Activated CD4-positive, alpha-beta memory T cell treated with anti-CD3 and anti-CD28 coated beads for 36 hours (primary cell): ENCODE measurements at regions of chr12 and their contacts with region 1.

Region 1: DNA sequence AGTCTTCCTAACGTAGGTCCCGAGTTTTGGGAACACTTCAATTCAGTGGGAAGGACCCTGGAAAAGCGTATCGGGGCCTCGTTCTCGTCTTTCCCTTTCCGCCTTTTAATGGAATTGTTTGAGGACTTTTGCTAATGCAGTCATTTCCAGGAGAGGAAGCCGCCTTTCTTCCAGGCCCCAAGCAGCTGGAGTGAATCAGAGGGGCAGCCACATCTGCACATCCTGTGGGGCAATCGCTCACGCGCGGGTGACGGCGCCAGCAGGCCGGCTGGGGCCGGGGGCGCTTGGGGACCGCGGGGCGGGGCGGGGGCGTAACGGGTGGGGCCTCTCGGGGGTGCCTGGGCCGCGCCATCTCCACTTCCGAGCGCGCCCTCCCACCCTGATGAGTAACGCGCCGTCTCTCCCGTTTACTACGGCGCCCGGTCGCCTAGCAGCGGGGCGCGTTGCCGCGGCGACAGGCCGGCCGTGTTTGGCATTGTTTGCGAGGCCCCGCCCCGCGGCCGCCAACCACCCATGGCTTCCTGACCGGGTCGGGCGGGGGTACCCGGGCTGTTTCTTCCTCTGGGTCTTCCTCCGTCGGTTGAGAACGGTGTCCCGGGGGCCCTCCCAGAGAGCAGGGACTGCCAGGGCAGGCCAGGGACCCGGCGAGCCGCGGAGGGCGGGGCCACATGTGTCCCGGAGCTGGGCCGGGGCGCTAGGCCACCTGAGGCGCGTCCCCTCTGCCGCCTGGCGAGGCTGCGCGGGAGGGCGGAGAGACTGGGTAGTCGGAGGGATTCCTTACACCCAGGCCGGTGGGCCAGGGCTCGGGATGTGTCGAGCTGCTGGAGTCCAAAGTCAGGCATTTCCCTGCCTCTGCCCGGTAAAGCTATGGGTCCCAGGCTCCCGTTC is 2.3 kb downstream of the GSG1 start:
- DNase-seq: peak; percentile 93
- H3K4me3 Mint-ChIP-seq: peak overlapping the region; percentile 61
- H3K27ac Mint-ChIP-seq: peak overlapping the region; percentile 83
- H3K4me1 Mint-ChIP-seq: peaks cover 57% of the 10 kb centered on the region
- H3K27me3 Mint-ChIP-seq: no peaks in the 10 kb centered on the region

Region 2: DNA sequence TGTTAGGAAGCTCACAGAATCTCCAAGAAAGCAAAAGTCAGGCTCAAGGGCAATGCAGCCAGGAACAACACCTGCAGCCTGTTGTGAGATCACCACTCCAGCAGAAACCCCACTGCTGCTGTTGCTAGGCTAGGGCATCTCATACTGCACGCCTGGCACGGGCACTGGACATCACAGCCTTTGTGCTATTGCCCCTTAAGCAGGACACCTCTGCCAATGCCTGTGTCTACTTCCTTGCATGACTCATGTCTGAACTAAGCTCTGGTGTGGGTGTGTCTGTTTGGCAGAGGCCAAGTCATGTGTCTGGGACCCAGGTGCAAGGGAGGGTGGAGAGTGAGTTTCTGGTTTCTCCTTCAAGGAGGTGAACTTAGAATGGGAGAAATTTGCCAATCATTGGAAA is 297.9 kb before region 1 on chr12:
- CTCF ChIA-PET with region 1: no interaction called
- POLR2A ChIA-PET with region 1: no interaction called
- intact Hi-C with region 1: loop called (anchors 2 kb)
- DNase-seq: peak; percentile 61
- H3K4me3 Mint-ChIP-seq: no peak overlapping the region
- H3K27ac Mint-ChIP-seq: peak overlapping the region; percentile 50
- H3K4me1 Mint-ChIP-seq: peaks cover 46% of the 10 kb centered on the region
- H3K27me3 Mint-ChIP-seq: no peaks in the 10 kb centered on the region

Region 3: GRCh38 chr12:12954356-12954755 is 146.8 kb before region 1 on chr12:
- CTCF ChIA-PET with region 1: no interaction called
- POLR2A ChIA-PET with region 1: no interaction called
- intact Hi-C with region 1: no loop called
- DNase-seq: no peak
- H3K4me3 Mint-ChIP-seq: no peak overlapping the region
- H3K27ac Mint-ChIP-seq: no peak overlapping the region
- H3K4me1 Mint-ChIP-seq: no peaks in the 10 kb centered on the region
- H3K27me3 Mint-ChIP-seq: peaks cover 3% of the 10 kb centered on the region

Region 4: DNA sequence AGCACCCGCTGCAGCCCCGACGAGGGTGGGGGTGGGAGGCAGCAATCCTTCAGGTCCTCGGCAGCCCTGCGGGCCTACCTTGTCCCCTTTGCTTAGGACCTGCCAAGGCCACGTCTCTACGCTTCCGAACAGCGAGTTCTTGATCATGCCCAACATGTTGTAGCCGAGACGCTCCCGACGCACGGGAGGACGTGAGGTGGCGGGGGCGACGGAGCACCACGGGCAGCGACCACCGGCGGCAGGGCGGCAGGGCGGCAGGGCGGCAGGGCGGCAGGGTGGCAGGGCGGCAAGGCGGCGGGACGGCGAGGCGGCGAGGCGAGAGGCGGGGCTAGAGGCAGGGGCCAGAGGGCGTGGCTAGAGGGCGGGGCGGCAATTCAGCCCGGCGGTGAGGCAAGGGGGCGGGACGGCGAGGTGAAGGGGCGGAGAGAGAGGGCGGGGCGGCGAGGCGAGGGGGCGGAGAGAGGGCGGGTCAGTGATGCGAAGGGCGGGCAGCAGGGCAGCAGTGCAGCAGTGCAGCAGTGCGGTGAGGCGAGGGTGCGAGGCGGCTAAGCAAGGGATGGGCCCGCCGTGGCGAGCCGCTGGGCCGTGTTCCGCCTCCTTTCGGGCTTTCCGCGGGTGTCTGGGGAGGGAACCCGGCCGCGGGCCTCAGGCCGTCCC is 101.0 kb before region 1 on chr12 and contains the start of gene HEBP1:
- CTCF ChIA-PET with region 1: no interaction called
- POLR2A ChIA-PET with region 1: no interaction called
- intact Hi-C with region 1: loop called (anchors 2 kb)
- DNase-seq: peak; percentile 97
- H3K4me3 Mint-ChIP-seq: peak within 1 kb of the TSS; percentile 82
- H3K27ac Mint-ChIP-seq: peak within 1 kb of the TSS; percentile 53
- H3K4me1 Mint-ChIP-seq: peaks cover 25% of the 10 kb centered on the region
- H3K27me3 Mint-ChIP-seq: peaks cover 6% of the 10 kb centered on the region
- total RNA-seq, gene HEBP1: 20.5 to 22.4 TPM

Region 5: DNA sequence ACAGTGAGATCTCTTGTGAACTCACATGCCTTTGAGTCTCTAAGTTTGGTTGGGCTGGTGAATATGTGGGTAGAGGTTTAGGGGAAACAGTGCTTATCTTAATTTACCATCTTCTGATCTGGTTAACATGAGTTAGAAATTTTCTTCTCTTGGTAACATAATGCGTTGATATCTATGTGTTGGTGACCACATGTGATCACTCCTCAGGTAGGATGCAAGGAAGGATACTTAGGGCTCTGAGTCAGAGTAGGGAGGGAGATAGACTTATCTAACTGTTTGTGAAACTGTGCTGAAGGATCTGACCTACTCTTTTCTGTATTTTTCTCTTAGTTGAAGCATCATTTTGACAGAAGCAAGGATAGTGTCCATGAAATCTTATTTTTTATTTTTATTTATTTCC is 33.8 kb before region 1 on chr12:
- CTCF ChIA-PET with region 1: no interaction called
- POLR2A ChIA-PET with region 1: no interaction called
- intact Hi-C with region 1: no loop called
- DNase-seq: no peak
- H3K4me3 Mint-ChIP-seq: no peak overlapping the region
- H3K27ac Mint-ChIP-seq: no peak overlapping the region
- H3K4me1 Mint-ChIP-seq: no peaks in the 10 kb centered on the region
- H3K27me3 Mint-ChIP-seq: no peaks in the 10 kb centered on the region

Region 6: DNA sequence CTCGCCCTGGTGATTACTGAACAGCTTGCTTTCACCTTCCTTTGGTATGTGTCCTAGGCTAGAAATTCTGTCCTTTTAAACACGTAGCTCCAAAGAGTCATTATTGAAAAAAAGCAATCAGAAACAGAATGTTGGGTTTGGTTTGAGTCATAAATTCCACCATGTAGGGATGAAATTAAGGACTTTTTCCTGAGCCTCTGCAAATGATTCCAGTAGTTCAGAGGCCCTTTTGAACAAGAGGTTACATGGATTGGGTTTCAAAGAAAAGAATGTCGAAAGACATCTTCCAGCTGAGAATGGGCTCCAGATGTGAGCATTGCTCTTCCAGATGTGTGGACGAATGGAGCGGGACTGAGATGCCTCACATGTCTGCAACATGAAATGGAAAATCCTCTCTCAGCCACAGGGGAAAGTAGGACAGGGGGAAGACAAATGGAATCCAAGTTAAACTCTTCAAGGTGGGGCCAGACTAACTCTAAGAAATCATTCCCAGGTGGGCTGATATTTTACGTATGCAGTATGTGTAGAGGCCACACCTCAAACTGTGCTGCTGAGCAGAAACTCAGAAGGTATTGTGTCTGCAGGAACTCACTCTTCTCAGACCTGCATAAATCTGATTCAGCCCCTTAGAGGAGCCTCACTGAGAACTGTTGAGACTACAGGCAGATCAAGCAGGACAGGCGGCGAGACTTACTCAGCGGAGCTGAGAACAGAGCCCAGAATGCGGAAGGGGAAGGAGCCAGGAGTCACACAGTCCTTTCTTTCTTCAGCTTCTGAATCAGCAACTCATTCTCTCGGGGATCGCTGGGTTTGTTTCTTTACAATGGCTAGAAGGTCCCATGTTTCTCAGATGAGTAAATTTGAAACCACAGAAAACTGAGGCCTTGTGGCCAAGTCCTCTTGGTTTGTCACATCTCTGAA is 72.1 kb after region 1 on chr12:
- CTCF ChIA-PET with region 1: interaction called, 3 read pairs
- POLR2A ChIA-PET with region 1: no interaction called
- intact Hi-C with region 1: loop called (anchors 1 kb)
- DNase-seq: peak; percentile 78
- H3K4me3 Mint-ChIP-seq: no peak overlapping the region
- H3K27ac Mint-ChIP-seq: no peak overlapping the region
- H3K4me1 Mint-ChIP-seq: peaks cover 19% of the 10 kb centered on the region
- H3K27me3 Mint-ChIP-seq: peaks cover 21% of the 10 kb centered on the region

Region 7: DNA sequence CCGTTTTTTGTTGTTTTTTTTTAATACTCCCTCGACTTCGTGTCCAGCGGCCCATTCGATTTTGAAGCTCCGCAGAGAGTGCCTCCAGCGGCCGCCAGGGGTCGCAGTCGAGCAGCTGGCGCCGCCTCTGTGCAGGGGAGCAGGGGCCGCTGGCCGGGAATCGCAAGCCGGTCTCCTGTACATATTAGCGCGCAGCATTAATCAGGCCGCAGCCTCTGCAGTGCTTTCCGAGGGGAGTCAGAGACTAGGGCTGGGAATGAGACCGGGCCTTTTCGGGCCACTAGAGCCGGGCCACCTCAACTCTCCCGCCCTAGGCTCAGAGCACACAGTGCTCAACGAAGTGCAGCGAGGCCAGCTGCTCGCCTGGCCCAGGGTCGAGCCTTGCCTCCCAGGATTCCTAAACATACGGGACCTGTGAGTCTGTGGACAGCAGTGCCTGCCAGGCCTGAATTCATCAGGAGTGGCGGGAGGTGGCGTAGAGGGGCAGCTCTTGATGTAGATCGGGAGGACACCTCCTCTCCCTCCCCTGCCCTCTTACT is 177.2 kb after region 1 on chr12:
- CTCF ChIA-PET with region 1: no interaction called
- POLR2A ChIA-PET with region 1: no interaction called
- intact Hi-C with region 1: no loop called
- DNase-seq: peak; percentile 70
- H3K4me3 Mint-ChIP-seq: no peak overlapping the region
- H3K27ac Mint-ChIP-seq: no peak overlapping the region
- H3K4me1 Mint-ChIP-seq: peaks cover 2% of the 10 kb centered on the region
- H3K27me3 Mint-ChIP-seq: peaks cover 33% of the 10 kb centered on the region

Region 8: GRCh38 chr12:13347241-13348043 is 246.3 kb after region 1 on chr12:
- CTCF ChIA-PET with region 1: no interaction called
- POLR2A ChIA-PET with region 1: no interaction called
- intact Hi-C with region 1: loop called (anchors 1 kb)
- DNase-seq: peak; percentile 76
- H3K4me3 Mint-ChIP-seq: no peak overlapping the region
- H3K27ac Mint-ChIP-seq: peak overlapping the region; percentile 18
- H3K4me1 Mint-ChIP-seq: peaks cover 11% of the 10 kb centered on the region
- H3K27me3 Mint-ChIP-seq: peaks cover 33% of the 10 kb centered on the region